Heart left ventricle (tissue), 16 donors: ENCODE measurements at regions of chr2 and their contacts with region 1.

Region 1: GRCh38 chr2:173021939-173022371 is 53.7 kb upstream of the MAP3K20 start:
- DNase-seq: peak in 4 of 5 donors; percentile 43 to 77 (median 59)
- ATAC-seq: peak; percentile 86 to 93 (median 92)
- H3K4me3 ChIP-seq: no peak overlapping the region
- H3K27ac ChIP-seq: peak overlapping the region in 9 of 12 donors; percentile 22 to 70 (median 57)
- H3K4me1 ChIP-seq: peaks cover 0 to 16% (median 5%) of the 10 kb centered on the region in 12 donors
- H3K27me3 ChIP-seq: no peaks in the 10 kb centered on the region
- CTCF ChIP-seq: peak in 9 of 12 donors; percentile 14 to 55 (median 38)
- POLR2A ChIP-seq: no peak

Region 2: GRCh38 chr2:172806493-172806892 is 215.5 kb before region 1 on chr2:
- intact Hi-C with region 1: loop called in 4 of 10 experiments (anchors 5 to 10 kb)
- DNase-seq: no peak
- ATAC-seq: peak in 2 of 4 donors; percentile 34 to 47
- H3K4me3 ChIP-seq: no peak overlapping the region
- H3K27ac ChIP-seq: no peak overlapping the region
- H3K4me1 ChIP-seq: peaks cover 0 to 6% (median 0%) of the 10 kb centered on the region in 12 donors
- H3K27me3 ChIP-seq: no peaks in the 10 kb centered on the region
- CTCF ChIP-seq: peak; percentile 77 to 94 (median 88)
- POLR2A ChIP-seq: no peak

Region 3: DNA sequence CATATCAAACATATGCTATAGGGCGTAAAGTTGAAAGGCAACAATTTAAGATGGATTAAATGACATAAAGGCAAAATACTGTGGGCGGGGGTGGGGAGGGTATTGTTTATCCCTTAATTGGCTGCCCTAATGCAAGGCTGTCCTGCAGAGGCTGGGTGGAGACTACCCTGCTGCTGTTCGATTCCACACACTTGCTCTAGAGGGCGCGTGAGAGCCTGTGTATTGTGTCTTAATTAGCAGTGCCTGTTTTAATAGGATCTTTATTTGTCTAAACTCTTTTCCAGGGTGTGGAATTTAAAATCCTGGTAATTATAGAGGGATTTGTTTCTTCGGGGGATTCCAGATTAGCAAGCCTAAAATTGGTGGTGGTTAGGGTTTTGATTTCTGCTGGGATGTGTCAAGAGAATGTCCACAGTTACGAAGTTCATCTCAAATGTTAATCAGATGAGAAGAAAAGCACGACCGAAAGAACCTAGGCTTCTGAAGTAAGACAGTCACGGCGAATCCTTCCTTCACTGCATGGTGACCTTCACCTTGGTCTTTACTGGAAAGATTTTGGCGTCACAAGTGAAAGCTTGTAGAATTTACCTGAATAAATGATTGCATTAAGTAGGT is 49.8 kb before region 1 on chr2:
- intact Hi-C with region 1: loop called in 5 of 10 experiments (anchors 5 to 10 kb)
- DNase-seq: peak in 3 of 5 donors; percentile 30 to 49 (median 42)
- ATAC-seq: peak in 2 of 4 donors; percentile 35 to 56
- H3K4me3 ChIP-seq: no peak overlapping the region
- H3K27ac ChIP-seq: no peak overlapping the region
- H3K4me1 ChIP-seq: peaks cover 0 to 43% (median 23%) of the 10 kb centered on the region in 12 donors
- H3K27me3 ChIP-seq: no peaks in the 10 kb centered on the region
- CTCF ChIP-seq: peak; percentile 56 to 88 (median 74)
- POLR2A ChIP-seq: no peak

Region 4: DNA sequence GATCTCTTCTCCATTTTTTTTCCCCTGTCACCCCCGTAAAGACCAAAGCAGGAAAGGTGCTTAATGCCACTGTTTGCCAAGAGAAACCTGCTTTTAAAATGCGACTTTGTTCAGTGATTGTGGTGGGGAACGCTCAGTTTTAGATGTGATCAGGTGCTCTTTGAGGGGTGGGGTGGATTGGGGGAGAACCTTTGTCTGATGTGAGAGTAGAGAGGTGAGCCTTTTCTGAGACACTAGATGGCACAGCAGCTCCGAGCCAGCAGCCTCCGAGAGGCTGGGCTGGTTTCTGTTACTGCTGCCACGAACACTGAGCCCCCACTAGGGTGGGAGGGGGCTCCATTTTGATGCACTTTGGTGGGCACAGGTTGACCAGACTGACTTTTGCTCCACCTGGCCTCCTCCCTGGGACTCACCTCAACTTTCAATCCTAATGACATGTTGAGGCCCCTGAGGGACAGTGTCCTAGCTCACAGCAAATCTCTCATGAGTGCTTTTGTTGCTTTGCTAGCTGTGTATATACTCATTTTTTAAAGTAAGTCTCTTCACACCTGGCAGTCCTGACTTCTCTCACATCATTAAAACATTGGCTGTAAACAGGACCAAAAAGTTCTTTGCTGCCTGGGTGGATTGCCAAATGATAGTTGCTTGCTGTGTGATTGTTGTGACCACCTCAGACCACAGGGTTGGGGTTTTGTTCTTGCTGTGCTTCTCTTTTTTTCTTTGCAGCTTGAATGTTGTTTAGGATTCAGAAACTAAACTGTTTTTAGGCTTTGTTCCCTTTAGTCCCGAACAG is 44.5 kb before region 1 on chr2:
- intact Hi-C with region 1: loop called in 6 of 10 experiments (anchors 2 to 10 kb)
- DNase-seq: no peak
- ATAC-seq: peak; percentile 51 to 73 (median 62)
- H3K4me3 ChIP-seq: no peak overlapping the region
- H3K27ac ChIP-seq: no peak overlapping the region
- H3K4me1 ChIP-seq: peaks cover 0 to 11% (median 5%) of the 10 kb centered on the region in 12 donors
- H3K27me3 ChIP-seq: no peaks in the 10 kb centered on the region
- CTCF ChIP-seq: peak in 8 of 12 donors; percentile 18 to 53 (median 30)
- POLR2A ChIP-seq: no peak

Region 5: GRCh38 chr2:173159794-173160463 is 138.0 kb after region 1 on chr2:
- intact Hi-C with region 1: no loop called
- DNase-seq: peak; percentile 43 to 95 (median 70)
- ATAC-seq: peak; percentile 75 to 99 (median 93)
- H3K4me3 ChIP-seq: no peak overlapping the region
- H3K27ac ChIP-seq: peak overlapping the region in 9 of 12 donors; percentile 13 to 87 (median 55)
- H3K4me1 ChIP-seq: peaks cover 7 to 50% (median 25%) of the 10 kb centered on the region in 12 donors
- H3K27me3 ChIP-seq: no peaks in the 10 kb centered on the region
- CTCF ChIP-seq: no peak
- POLR2A ChIP-seq: no peak